ENCODE measurements at regions of chr4 and their contacts with region 1.

Region 1: DNA sequence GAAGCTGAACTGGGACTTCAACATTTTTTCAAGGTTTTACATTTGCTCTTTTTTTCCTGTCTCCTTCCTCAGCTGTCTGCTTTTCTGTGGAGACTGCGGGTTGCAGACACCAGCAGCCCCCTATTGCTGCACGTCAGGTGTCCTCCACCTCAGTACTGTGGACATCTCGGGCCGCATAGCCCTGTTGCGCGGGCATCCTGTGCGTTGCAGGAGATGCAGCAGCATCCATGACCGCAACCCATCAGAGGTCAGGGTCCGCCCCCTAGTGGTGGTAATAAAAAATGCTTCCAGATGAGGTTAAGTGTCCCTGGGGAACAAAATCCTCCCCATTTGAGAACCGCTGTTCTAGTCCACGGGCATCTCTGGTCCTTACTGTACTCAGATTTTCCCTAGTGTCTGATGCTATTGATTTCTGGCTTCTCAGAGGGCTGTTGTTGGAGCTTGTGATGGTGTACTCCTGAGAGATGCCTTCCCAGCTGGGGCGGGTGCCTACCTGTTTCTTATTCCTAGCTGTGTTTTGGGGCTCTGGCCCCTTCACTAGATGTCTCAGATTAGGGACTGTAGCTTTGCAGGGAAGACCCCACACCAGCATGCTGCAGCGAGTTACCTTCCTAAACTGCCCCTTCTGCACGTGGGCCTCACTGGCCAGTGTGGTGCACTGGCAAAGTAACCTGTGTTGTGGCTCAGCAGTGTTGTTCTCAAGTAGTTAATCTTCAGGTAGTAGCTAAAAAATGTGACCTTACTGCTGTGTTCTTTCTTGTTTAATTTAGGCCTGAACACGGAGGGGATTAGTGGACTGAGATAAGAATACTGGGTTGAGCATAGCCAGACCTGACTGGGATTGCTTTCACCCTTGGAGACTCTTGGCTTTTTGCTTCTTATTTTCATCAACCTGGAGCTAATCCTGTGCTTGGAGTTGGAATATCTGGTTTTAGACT is 28.2 kb downstream of the NSD2 start:
- DNase-seq: peak; percentile 87
- ATAC-seq: peak; percentile 98
- H3K4me3 ChIP-seq: no peak overlapping the region
- H3K4me3 Mint-ChIP-seq: no peak overlapping the region
- H3K27ac ChIP-seq: no peak overlapping the region
- H3K27ac Mint-ChIP-seq: no peak overlapping the region
- H3K4me1 ChIP-seq: peaks cover 5 to 9% of the 10 kb centered on the region in 2 donors
- H3K4me1 Mint-ChIP-seq: peaks cover 9% of the 10 kb centered on the region
- H3K27me3 ChIP-seq: no peaks in the 10 kb centered on the region
- H3K27me3 Mint-ChIP-seq: no peaks in the 10 kb centered on the region
- CTCF ChIP-seq: peak; percentile 92

Region 2: DNA sequence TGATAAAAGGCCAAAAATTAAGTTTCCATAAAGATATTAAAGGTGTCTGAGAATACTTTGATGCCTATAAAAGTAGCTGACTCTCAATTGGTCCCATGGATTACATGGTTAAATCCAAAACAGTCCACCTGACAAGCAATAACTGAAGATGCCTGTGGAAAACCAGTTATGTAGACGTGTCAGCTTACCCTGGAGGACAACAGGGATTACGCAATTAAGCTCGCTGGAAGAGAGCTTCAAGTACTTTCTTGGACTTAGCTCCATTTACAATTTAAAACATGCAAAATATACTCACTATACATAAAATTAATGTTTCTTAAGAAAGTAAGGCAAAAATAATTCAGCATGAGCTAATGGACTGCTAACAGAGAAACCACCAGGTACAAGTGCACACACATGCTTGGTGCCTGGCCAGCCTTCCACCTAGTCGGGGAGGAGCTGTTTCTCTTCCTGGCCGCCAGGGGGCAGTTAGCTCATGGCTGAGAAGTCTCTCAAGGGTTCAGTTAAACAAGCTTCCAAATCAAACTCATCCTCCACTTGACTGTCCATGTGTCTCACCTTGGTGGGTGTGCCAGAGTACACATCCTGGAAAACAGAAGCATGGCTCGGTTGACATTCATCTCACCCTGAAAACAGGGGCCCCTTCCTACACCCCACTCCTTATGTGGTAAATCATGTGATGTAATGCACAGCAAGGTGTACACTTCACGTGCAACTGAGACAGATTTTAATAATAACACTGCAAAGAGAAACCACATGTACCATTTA is 206.1 kb before region 1 on chr4:
- CTCF ChIA-PET with region 1: interaction called, 20 read pairs
- POLR2A ChIA-PET with region 1: no interaction called
- intact Hi-C with region 1: no loop called
- DNase-seq: peak; percentile 87
- ATAC-seq: peak; percentile 96
- H3K4me3 ChIP-seq: no peak overlapping the region
- H3K4me3 Mint-ChIP-seq: no peak overlapping the region
- H3K27ac ChIP-seq: no peak overlapping the region
- H3K27ac Mint-ChIP-seq: peak overlapping the region; percentile 53
- H3K4me1 ChIP-seq: no peaks in the 10 kb centered on the region
- H3K4me1 Mint-ChIP-seq: peaks cover 4% of the 10 kb centered on the region
- H3K27me3 ChIP-seq: no peaks in the 10 kb centered on the region
- H3K27me3 Mint-ChIP-seq: no peaks in the 10 kb centered on the region
- CTCF ChIP-seq: peak; percentile 93

Region 3: DNA sequence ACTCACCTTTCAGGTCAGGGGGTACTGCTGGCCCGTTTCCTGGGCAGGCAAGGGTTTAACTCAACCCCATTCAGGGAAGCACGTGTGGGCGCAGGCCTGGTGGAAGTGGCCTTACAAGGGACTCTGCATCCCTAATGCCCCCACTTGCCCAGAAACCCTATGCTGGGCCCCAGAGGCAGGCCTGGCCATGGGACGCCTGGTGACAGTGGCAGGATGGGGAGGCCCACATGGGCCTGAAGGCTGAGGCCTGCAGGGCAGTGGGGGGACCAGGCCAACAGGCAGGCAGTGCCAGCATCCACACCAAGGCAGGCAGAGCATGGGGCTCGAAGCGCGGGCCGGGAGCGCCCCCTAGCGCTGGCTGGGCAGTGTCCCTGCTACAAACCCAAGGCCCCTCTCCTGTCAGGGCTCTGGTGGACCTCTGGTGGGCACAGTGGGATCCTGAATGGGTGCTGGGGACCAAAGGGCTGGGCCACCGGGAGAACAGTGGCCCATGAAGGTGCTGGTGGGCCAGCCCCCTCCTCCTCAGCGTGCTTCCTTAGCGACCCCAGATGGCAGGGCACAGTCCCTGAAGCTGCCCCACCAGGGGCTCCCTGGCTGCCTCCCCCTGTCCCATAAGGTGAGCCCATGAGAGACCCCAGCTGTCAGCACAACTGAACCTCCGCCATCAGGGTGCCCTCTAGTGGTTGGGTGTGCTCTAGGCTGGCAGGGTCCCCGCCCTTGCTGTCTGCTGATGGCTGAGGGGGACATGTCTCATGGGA is 89.5 kb before region 1 on chr4:
- CTCF ChIA-PET with region 1: interaction called, 38 read pairs
- POLR2A ChIA-PET with region 1: no interaction called
- intact Hi-C with region 1: loop called (anchors 1 kb)
- DNase-seq: peak; percentile 74
- ATAC-seq: peak; percentile 60
- H3K4me3 ChIP-seq: no peak overlapping the region
- H3K4me3 Mint-ChIP-seq: no peak overlapping the region
- H3K27ac ChIP-seq: no peak overlapping the region
- H3K27ac Mint-ChIP-seq: no peak overlapping the region
- H3K4me1 ChIP-seq: no peaks in the 10 kb centered on the region
- H3K4me1 Mint-ChIP-seq: no peaks in the 10 kb centered on the region
- H3K27me3 ChIP-seq: no peaks in the 10 kb centered on the region
- H3K27me3 Mint-ChIP-seq: no peaks in the 10 kb centered on the region
- CTCF ChIP-seq: peak; percentile 83

Region 4: DNA sequence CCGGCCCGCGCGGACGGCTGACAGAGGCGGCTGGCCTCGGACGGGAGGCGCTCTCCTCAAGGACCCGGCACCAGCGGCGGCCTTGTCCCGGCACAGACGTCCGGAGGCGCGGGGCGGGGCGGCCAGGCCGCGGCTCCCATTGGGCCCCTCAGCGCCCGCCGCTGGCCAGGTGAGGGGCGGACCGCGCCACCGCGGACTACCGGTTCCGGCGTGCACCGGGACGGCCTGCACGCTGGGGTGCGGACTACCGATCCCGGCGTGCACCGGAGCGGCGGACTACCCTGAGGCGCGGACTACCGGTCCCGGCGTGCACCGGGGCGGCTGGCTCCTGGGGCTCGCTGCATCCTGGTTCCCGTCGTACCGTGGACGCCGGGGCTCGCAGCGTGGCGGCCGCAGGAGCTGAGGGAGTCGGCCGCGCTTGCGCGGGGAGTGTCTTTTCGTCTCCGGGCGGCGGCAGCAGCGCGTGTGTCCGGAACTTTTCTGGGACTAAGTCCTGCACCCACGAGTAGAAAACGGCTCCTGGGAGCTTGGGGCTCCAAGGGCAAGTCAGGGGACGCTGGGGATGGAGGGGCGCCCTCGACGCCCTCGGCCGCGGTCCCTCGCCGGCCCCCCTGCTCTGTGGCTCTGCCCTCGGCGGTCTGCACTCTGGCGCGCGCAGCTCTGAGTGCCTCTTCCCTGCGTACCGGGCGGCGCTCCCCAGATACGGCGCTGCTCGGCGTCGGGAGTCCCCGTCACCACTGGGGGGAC is 43.2 kb before region 1 on chr4 and contains the start of gene LETM1:
- CTCF ChIA-PET with region 1: interaction called, 7 read pairs
- POLR2A ChIA-PET with region 1: no interaction called
- intact Hi-C with region 1: loop called (anchors 1 kb)
- DNase-seq: peak; percentile 92
- ATAC-seq: peak; percentile 96
- H3K4me3 ChIP-seq: peak within 1 kb of the TSS; percentile 38 to 93 (median 90)
- H3K4me3 Mint-ChIP-seq: peak within 1 kb of the TSS; percentile 85
- H3K27ac ChIP-seq: peak within 1 kb of the TSS in 1 of 2 donors; percentile 61
- H3K27ac Mint-ChIP-seq: peak within 1 kb of the TSS; percentile 56
- H3K4me1 ChIP-seq: peaks cover 15 to 19% of the 10 kb centered on the region in 2 donors
- H3K4me1 Mint-ChIP-seq: peaks cover 23% of the 10 kb centered on the region
- H3K27me3 ChIP-seq: peaks cover 0 to 3% (median 0%) of the 10 kb centered on the region in 4 experiments
- H3K27me3 Mint-ChIP-seq: no peaks in the 10 kb centered on the region
- CTCF ChIP-seq: peak; percentile 17
- total RNA-seq, gene LETM1: 44.8 and 45.1 TPM in 2 replicates

Region 5: GRCh38 chr4:1887052-1887451 is 12.4 kb before region 1 on chr4:
- CTCF ChIA-PET with region 1: interaction called, 18 read pairs
- POLR2A ChIA-PET with region 1: interaction called, 14 read pairs
- intact Hi-C with region 1: no loop called
- DNase-seq: no peak
- ATAC-seq: no peak
- H3K4me3 ChIP-seq: no peak overlapping the region
- H3K4me3 Mint-ChIP-seq: no peak overlapping the region
- H3K27ac ChIP-seq: no peak overlapping the region
- H3K27ac Mint-ChIP-seq: peak overlapping the region; percentile 4
- H3K4me1 ChIP-seq: peaks cover 0 to 5% of the 10 kb centered on the region in 2 donors
- H3K4me1 Mint-ChIP-seq: peaks cover 20% of the 10 kb centered on the region
- H3K27me3 ChIP-seq: no peaks in the 10 kb centered on the region
- H3K27me3 Mint-ChIP-seq: no peaks in the 10 kb centered on the region
- CTCF ChIP-seq: no peak

Region 6: GRCh38 chr4:2388429-2389182 is 489.2 kb after region 1 on chr4:
- CTCF ChIA-PET with region 1: no interaction called
- POLR2A ChIA-PET with region 1: no interaction called
- intact Hi-C with region 1: no loop called
- DNase-seq: no peak
- ATAC-seq: no peak
- H3K4me3 ChIP-seq: no peak overlapping the region
- H3K4me3 Mint-ChIP-seq: no peak overlapping the region
- H3K27ac ChIP-seq: no peak overlapping the region
- H3K27ac Mint-ChIP-seq: no peak overlapping the region
- H3K4me1 ChIP-seq: peaks cover 14 to 18% of the 10 kb centered on the region in 2 donors
- H3K4me1 Mint-ChIP-seq: peaks cover 32% of the 10 kb centered on the region
- H3K27me3 ChIP-seq: peaks cover 0 to 30% (median 8%) of the 10 kb centered on the region in 4 experiments
- H3K27me3 Mint-ChIP-seq: peaks cover 7% of the 10 kb centered on the region
- CTCF ChIP-seq: no peak